Right ventricle myocardium inferior (tissue), 1 donor: ENCODE measurements at regions of chr4 and their contacts with region 1.

Region 1: DNA sequence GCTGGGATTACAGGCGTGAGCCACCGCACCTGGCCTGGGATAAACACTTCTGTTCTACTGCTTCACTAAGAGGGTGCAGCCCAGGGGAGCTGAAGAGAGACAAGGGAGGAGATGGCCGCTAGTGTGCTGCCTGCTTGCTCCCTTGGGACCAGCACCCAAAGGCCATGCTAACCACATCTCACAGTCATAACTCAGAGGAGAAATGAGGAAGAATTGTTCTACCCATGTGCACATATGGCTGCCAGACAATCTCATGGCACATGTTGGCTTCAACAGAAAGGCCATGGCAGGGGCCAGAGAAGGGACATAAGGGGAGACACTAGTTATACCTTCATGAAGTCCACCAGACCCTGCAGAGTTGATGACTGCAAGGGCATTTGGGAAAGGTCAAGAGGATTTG is 22.4 kb downstream of the CLDN22 start:
- DNase-seq: no peak
- ATAC-seq: no peak

Region 2: GRCh38 chr4:183407128-183407585 is 109.5 kb after region 1 on chr4:
- intact Hi-C with region 1: loop called (anchors 10 kb)
- DNase-seq: peak; percentile 93
- ATAC-seq: peak; percentile 94